ENCODE measurements at regions of chr17 and their contacts with region 1.

Region 1: GRCh38 chr17:38557836-38558727 is 47.7 kb downstream of the SRCIN1 start:
- DNase-seq: peak; percentile 98 to 99
- ATAC-seq: peak; percentile 77 to 90
- H3K4me3 ChIP-seq: peak overlapping the region; percentile 44
- H3K27ac ChIP-seq: peak overlapping the region; percentile 68 to 88
- H3K4me1 ChIP-seq: peaks cover 16% of the 10 kb centered on the region
- CTCF ChIP-seq: peak; percentile 95
- EP300 ChIP-seq: no peak
- POLR2A ChIP-seq: no peak
- RAD21 ChIP-seq: peak; percentile 84 to 89

Region 2: DNA sequence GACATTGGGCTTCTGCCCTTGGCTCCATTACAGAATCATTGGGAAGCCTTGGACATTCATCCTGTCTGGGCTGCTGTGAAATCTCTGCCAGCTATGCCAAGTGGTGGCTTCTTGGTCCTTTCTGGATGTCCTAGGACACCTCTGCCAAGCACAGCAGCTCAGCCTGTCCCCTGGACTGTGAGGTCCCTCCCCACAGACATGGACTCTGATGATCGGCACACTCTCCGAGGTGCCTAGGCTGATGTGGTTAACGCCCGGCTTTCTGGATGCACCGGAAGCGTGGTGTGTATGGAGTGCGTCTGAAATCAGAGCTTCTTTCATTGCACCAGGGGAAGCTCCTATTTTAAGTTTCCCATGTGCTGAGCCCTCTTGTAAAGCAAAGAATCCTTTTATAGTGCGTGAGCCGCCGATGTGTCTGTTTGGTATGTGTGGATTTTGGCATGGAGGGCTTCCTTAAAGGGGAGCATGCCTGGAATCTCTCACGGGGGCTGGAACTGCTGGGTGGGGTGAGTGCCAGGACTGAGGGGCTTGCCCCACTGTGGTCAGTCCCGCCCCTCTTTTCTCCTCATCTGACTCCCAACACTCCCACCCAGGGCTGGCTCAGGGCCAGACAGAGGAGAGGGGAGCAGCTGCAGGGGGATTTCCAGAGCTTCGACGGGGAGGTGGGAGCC is 136.8 kb before region 1 on chr17:
- CTCF ChIA-PET with region 1: interaction called, 10 read pairs
- POLR2A ChIA-PET with region 1: no interaction called
- DNase-seq: no peak
- ATAC-seq: no peak
- H3K4me3 ChIP-seq: no peak overlapping the region
- H3K27ac ChIP-seq: no peak overlapping the region
- H3K4me1 ChIP-seq: no peaks in the 10 kb centered on the region
- CTCF ChIP-seq: no peak
- EP300 ChIP-seq: no peak
- POLR2A ChIP-seq: no peak
- RAD21 ChIP-seq: no peak

Region 3: GRCh38 chr17:38509008-38509771 is 48.9 kb before region 1 on chr17:
- CTCF ChIA-PET with region 1: interaction called, 15 read pairs
- POLR2A ChIA-PET with region 1: interaction called, 3 read pairs
- DNase-seq: peak; percentile 86 to 97
- ATAC-seq: peak; percentile 67 to 86
- H3K4me3 ChIP-seq: no peak overlapping the region
- H3K27ac ChIP-seq: no peak overlapping the region
- H3K4me1 ChIP-seq: peaks cover 19% of the 10 kb centered on the region
- CTCF ChIP-seq: peak; percentile 66
- EP300 ChIP-seq: no peak
- POLR2A ChIP-seq: no peak
- RAD21 ChIP-seq: peak; percentile 39 to 66; a peak in 4 of 5 replicates

Region 4: GRCh38 chr17:38533866-38534497 is 24.1 kb before region 1 on chr17:
- CTCF ChIA-PET with region 1: interaction called, 38 read pairs
- POLR2A ChIA-PET with region 1: no interaction called
- DNase-seq: no peak
- ATAC-seq: peak; percentile 35 to 41; a peak in 4 of 6 replicates
- H3K4me3 ChIP-seq: no peak overlapping the region
- H3K27ac ChIP-seq: no peak overlapping the region
- H3K4me1 ChIP-seq: no peaks in the 10 kb centered on the region
- CTCF ChIP-seq: no peak
- EP300 ChIP-seq: no peak
- POLR2A ChIP-seq: no peak
- RAD21 ChIP-seq: no peak

Region 5: DNA sequence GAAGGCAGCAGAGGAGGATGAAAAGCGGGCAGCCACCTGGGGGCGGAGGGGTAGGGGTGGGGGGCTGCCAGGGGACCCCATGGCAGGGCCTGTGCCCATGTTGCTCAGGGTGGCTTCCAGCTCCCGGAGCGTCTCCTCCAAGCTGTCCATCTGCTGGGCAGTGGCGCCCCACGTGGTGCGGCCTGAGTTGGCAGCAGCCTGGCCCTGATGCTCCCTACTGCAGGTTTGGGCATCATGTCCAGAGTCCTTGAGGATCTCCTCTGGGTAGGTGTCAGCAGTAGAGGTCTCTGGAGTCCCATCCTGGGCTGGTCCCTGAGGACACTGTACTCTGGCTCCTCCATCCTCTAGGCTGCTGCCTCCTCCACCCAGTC is 13.3 kb before region 1 on chr17:
- CTCF ChIA-PET with region 1: interaction called, 64 read pairs
- POLR2A ChIA-PET with region 1: no interaction called
- DNase-seq: no peak
- ATAC-seq: peak; percentile 17 to 63; a peak in 4 of 6 replicates
- H3K4me3 ChIP-seq: no peak overlapping the region
- H3K27ac ChIP-seq: no peak overlapping the region
- H3K4me1 ChIP-seq: no peaks in the 10 kb centered on the region
- CTCF ChIP-seq: no peak
- EP300 ChIP-seq: no peak
- POLR2A ChIP-seq: no peak
- RAD21 ChIP-seq: no peak

Region 6: GRCh38 chr17:38572669-38573365 is 14.7 kb after region 1 on chr17:
- CTCF ChIA-PET with region 1: interaction called, 82 read pairs
- POLR2A ChIA-PET with region 1: interaction called, 3 read pairs
- DNase-seq: peak; percentile 23 to 87
- ATAC-seq: peak; percentile 22 to 58; a peak in 5 of 6 replicates
- H3K4me3 ChIP-seq: peak overlapping the region; percentile 61
- H3K27ac ChIP-seq: peak overlapping the region; percentile 53 to 83; a peak in 5 of 6 replicates
- H3K4me1 ChIP-seq: peaks cover 12% of the 10 kb centered on the region
- CTCF ChIP-seq: no peak
- EP300 ChIP-seq: no peak
- POLR2A ChIP-seq: no peak
- RAD21 ChIP-seq: no peak

Region 7: GRCh38 chr17:38584350-38584925 is 26.4 kb after region 1 on chr17:
- CTCF ChIA-PET with region 1: interaction called, 948 read pairs
- POLR2A ChIA-PET with region 1: interaction called, 10 read pairs
- DNase-seq: peak; percentile 80 to 92
- ATAC-seq: peak; percentile 79 to 91
- H3K4me3 ChIP-seq: peak overlapping the region; percentile 24; the same call in 1 of the 3 replicates
- H3K27ac ChIP-seq: peak overlapping the region; percentile 51 to 63; a peak in 5 of 6 replicates
- H3K4me1 ChIP-seq: peaks cover 28% of the 10 kb centered on the region
- CTCF ChIP-seq: peak; percentile 99
- EP300 ChIP-seq: no peak
- POLR2A ChIP-seq: no peak
- RAD21 ChIP-seq: peak; percentile 88 to 93

Region 8: GRCh38 chr17:38690386-38690785 is 132.3 kb after region 1 on chr17:
- CTCF ChIA-PET with region 1: no interaction called
- POLR2A ChIA-PET with region 1: no interaction called
- DNase-seq: no peak
- ATAC-seq: no peak; a peak in 1 of 6 replicates
- H3K4me3 ChIP-seq: no peak overlapping the region
- H3K27ac ChIP-seq: no peak overlapping the region
- H3K4me1 ChIP-seq: no peaks in the 10 kb centered on the region
- CTCF ChIP-seq: no peak
- EP300 ChIP-seq: no peak
- POLR2A ChIP-seq: no peak
- RAD21 ChIP-seq: no peak

Region 9: DNA sequence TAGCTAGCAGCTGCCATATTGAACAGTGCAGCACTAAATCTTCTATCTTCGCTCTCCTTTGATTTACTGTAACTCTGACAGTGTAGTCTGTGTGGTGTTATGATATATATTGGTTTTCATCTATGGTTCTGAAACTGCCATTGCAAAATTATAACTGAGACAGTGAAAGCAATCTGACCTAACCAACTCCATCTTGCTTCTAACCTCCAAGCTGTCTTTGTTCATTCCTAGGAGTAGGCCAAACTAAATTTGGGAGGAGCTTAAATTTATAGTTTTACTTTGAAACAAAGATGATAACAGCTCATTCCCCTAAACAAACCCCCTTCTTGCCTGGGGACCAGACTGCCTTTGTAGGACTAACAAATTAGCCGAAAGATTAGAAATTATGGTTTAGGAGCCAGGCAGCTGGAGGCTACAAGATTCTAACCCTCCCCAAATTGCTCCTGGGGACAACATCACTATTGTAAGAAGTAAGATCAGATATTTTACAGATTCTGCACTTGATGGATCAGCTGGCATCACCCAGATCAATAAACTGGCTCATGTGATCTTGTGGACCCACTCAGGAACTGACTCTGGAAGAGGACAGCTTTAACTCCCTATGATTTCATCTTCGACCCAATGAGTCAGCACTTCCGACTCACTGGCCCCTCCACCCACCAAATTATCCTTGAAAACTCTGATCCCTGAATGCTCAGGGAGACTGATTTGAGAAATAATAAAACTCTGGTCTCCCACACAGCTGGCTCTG is 456.1 kb after region 1 on chr17:
- CTCF ChIA-PET with region 1: no interaction called
- POLR2A ChIA-PET with region 1: no interaction called
- DNase-seq: peak in 1 of 2 experiments; percentile 51
- ATAC-seq: peak in 1 of 2 experiments; percentile 48; a peak in 2 of 6 replicates
- H3K4me3 ChIP-seq: no peak overlapping the region
- H3K27ac ChIP-seq: peak overlapping the region; percentile 59 to 79
- H3K4me1 ChIP-seq: peaks cover 18% of the 10 kb centered on the region
- CTCF ChIP-seq: no peak
- EP300 ChIP-seq: no peak
- POLR2A ChIP-seq: no peak
- RAD21 ChIP-seq: no peak